IMR-90 (cell line): ENCODE measurements at regions of chr3 and their contacts with region 1.

Region 1: GRCh38 chr3:29280404-29281093 is at the start of gene RBMS3:
- DNase-seq: peak; percentile 97
- ATAC-seq: peak; percentile 82
- H3K4me3 ChIP-seq: peak within 1 kb of the TSS; percentile 91
- H3K27ac ChIP-seq: peak within 1 kb of the TSS; percentile 95
- H3K4me1 ChIP-seq: peaks cover 7% of the 10 kb centered on the region
- H3K27me3 ChIP-seq: no peaks in the 10 kb centered on the region
- CTCF ChIP-seq: peak; percentile 65
- POLR2A ChIP-seq: peak; percentile 79; the same call in 1 of the 2 replicates
- RAD21 ChIP-seq: peak; percentile 73
- total RNA-seq, gene RBMS3: 110 and 127 TPM in 2 replicates

Region 2: DNA sequence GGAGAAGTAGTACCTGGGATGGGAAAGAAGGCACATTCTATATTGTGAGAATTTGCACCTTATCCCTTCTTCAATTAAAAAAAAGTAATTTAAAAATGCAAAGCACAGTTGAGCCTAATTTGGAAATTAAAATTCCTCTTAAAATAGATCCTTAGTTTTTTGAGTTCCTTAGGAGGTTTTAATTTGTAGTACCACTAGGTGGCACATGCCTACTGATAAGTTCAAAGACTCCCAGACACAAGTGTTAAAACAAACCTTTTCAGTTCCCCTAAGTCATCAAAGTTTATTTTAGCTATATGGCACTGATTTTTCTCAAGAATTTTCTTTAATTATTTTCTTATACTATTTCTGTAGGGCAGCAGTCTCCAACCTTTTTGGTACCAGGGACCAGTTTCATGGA is 804.4 kb before region 1 on chr3:
- CTCF ChIA-PET with region 1: no interaction called
- POLR2A ChIA-PET with region 1: no interaction called
- dilution Hi-C with region 1: no loop called
- in situ Hi-C with region 1: no loop called
- intact Hi-C with region 1: loop called (anchors 5 kb)
- DNase-seq: peak; percentile 57
- ATAC-seq: peak; percentile 56; the same call in 1 of the 2 replicates
- H3K4me3 ChIP-seq: no peak overlapping the region
- H3K27ac ChIP-seq: no peak overlapping the region
- H3K4me1 ChIP-seq: no peaks in the 10 kb centered on the region
- H3K27me3 ChIP-seq: no peaks in the 10 kb centered on the region
- CTCF ChIP-seq: peak; percentile 59
- POLR2A ChIP-seq: no peak
- RAD21 ChIP-seq: peak; percentile 45

Region 3: DNA sequence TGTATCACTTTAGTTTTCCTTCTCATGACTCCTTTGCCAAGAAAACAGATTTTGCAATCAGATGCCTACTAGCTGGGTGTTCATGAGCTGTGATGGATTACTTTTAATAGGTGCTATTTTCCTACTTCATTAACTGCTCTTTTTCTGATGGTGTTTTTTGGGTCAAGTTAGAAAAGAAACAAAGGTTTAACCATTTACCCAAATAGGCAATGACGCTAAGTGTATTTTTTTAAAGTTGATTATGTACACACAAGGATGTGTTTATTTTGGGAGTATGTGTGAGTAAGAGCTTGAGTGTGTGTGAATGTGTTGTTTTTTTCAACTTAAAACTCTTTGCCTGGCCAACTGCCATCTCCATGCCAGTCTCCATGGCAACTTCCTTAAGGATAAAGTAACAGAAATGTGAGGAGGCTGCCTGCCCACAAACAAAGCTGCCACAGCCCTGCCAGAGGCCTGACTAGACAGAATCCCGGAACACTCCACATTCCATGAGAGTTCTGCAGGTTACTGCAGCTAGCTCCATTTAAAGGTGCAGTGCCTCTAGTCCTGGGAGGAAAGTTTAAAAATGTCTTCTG is 215.3 kb before region 1 on chr3:
- CTCF ChIA-PET with region 1: no interaction called
- POLR2A ChIA-PET with region 1: no interaction called
- dilution Hi-C with region 1: no loop called
- in situ Hi-C with region 1: no loop called
- intact Hi-C with region 1: loop called (anchors 1 kb)
- DNase-seq: peak; percentile 99
- ATAC-seq: peak; percentile 98
- H3K4me3 ChIP-seq: no peak overlapping the region
- H3K27ac ChIP-seq: no peak overlapping the region
- H3K4me1 ChIP-seq: 0 out of 2 replicates have a peak, but pooled peaks cover 4% of the 10 kb centered on the region
- H3K27me3 ChIP-seq: no peaks in the 10 kb centered on the region
- CTCF ChIP-seq: no peak
- POLR2A ChIP-seq: no peak
- RAD21 ChIP-seq: peak; percentile 27

Region 4: DNA sequence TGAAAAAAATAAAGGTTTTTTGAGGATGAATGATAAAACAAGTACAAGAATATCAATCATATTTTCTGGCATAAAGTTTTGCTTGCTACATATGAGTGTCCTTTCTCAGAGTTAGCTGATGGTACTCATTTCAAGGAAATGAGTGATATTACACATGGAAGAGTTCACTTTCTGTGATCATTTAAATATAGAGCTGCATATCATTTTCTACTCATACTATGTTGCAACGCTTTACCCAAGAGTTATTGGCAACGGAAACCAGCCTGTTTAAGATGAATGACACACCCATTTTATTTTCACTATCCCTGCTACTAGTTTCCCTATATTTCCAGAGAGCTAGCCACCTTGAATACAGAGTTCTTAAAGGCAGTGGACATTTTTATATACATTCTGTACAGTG is 35.1 kb before region 1 on chr3:
- CTCF ChIA-PET with region 1: no interaction called
- POLR2A ChIA-PET with region 1: no interaction called
- dilution Hi-C with region 1: no loop called
- in situ Hi-C with region 1: no loop called
- intact Hi-C with region 1: no loop called
- DNase-seq: no peak
- ATAC-seq: no peak
- H3K4me3 ChIP-seq: no peak overlapping the region
- H3K27ac ChIP-seq: no peak overlapping the region
- H3K4me1 ChIP-seq: no peaks in the 10 kb centered on the region
- H3K27me3 ChIP-seq: no peaks in the 10 kb centered on the region
- CTCF ChIP-seq: no peak
- POLR2A ChIP-seq: no peak
- RAD21 ChIP-seq: no peak

Region 5: GRCh38 chr3:29430558-29430971 is 150.0 kb after region 1 on chr3:
- CTCF ChIA-PET with region 1: no interaction called
- POLR2A ChIA-PET with region 1: no interaction called
- dilution Hi-C with region 1: no loop called
- in situ Hi-C with region 1: no loop called
- intact Hi-C with region 1: loop called (anchors 5 kb)
- DNase-seq: peak; percentile 75
- ATAC-seq: peak; percentile 77
- H3K4me3 ChIP-seq: no peak overlapping the region; the same call in 1 of the 2 replicates
- H3K27ac ChIP-seq: peak overlapping the region; percentile 87
- H3K4me1 ChIP-seq: peaks cover 9% of the 10 kb centered on the region
- H3K27me3 ChIP-seq: no peaks in the 10 kb centered on the region
- CTCF ChIP-seq: no peak
- POLR2A ChIP-seq: no peak
- RAD21 ChIP-seq: no peak

Region 6: DNA sequence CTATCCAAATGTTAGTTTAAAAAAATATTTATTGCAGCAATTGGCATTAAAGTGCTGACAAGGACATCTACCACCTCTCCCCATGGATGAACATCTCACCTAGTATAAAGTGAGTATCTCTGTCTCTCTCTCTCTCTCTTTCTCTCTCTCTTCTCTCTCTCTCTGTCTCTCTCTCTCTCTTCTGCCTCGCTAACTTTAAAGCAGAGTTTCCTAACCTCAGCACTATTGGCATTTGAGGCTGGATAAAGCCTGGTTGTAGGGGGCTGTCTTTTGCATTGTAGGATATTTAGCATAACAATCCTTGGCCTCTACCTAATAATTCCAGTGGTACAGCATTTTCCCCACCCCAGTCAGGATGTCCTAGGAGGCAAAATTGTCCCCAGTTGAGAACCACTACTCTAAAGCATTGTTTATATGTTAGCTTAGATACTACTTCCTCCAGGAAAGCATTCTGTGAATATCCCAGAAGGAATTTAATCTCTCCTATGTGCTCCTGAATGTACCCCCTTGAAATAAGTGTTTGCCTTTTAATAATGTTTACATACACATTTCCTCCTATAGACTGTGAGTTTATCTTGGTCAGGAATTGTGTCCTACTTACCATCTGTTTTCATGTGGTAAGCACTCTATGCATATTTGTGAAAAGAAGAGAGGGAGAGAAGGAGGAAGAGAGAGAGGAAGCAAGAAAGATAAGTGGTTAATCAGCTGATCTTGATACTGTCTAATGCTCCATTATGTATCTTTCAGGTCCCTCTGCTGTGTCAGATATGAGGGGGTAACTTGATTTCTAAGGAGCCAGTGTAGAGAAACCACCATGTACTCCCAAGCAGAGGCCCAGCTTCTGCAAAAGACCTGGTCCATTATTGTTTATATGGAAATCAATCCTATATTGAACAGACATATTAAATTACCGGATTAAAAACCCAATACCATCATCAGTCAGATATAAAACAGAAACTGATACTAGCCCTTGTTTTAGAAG is 346.9 kb after region 1 on chr3:
- CTCF ChIA-PET with region 1: no interaction called
- POLR2A ChIA-PET with region 1: no interaction called
- dilution Hi-C with region 1: no loop called
- in situ Hi-C with region 1: no loop called
- intact Hi-C with region 1: no loop called
- DNase-seq: peak; percentile 23
- ATAC-seq: peak; percentile 67
- H3K4me3 ChIP-seq: no peak overlapping the region
- H3K27ac ChIP-seq: no peak overlapping the region
- H3K4me1 ChIP-seq: peaks cover 3% of the 10 kb centered on the region
- H3K27me3 ChIP-seq: no peaks in the 10 kb centered on the region
- CTCF ChIP-seq: no peak
- POLR2A ChIP-seq: no peak
- RAD21 ChIP-seq: no peak

Region 7: DNA sequence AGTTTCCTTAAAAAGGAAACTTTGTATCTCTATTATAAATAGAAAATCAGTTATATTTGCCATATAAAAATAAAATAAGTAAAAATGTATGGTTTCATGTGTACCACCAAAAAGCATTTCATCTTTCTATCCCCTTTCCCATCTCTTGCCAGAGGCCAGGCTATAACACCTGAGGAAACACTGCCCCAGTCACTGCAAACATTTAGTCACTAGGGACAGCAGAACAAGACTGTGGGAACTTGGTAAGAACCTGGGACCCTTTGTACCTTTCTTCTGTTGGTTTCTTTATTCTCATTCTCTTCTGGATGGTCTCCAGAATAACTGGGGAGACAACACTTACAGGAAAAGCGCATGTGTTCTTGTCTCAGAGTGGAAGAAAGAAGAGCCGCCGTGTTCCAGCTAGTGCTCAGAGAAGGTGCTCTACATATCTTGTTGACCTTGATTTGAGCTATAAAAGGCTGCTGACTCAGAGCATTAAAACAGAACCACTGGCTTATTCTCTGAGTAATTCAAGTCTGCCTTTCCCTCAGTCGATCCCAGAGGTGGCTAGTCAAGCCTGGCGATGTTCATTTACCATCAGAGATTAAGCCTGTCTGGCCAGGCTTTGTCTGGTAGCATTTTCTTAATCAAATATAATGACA is 362.0 kb after region 1 on chr3:
- CTCF ChIA-PET with region 1: no interaction called
- POLR2A ChIA-PET with region 1: no interaction called
- dilution Hi-C with region 1: no loop called
- in situ Hi-C with region 1: no loop called
- intact Hi-C with region 1: loop called (anchors 5 kb)
- DNase-seq: peak; percentile 70
- ATAC-seq: peak; percentile 57; the same call in 1 of the 2 replicates
- H3K4me3 ChIP-seq: no peak overlapping the region
- H3K27ac ChIP-seq: no peak overlapping the region
- H3K4me1 ChIP-seq: peaks cover 4% of the 10 kb centered on the region; the same call in 1 of the 2 replicates
- H3K27me3 ChIP-seq: no peaks in the 10 kb centered on the region
- CTCF ChIP-seq: no peak
- POLR2A ChIP-seq: no peak
- RAD21 ChIP-seq: no peak

Region 8: DNA sequence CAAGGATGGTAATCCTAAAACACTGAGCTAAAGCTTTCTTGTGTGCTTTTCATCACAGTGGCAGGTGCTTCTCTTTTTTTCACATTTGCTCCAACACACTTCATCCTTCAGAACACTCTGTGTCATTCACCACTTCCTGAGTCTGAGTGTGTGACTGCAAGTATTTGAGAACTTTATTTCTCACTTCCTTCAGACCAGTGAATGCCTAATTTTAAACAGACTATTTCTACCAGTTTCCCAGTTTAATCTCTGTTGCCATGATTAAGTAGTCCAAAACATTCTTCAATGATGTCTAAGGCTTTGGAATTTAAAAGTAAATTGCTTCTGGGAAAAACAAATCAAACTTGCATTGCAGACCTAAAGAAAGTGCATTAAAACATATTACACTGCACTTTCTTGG is 541.5 kb after region 1 on chr3:
- CTCF ChIA-PET with region 1: no interaction called
- POLR2A ChIA-PET with region 1: no interaction called
- dilution Hi-C with region 1: no loop called
- in situ Hi-C with region 1: no loop called
- intact Hi-C with region 1: loop called (anchors 10 kb)
- DNase-seq: peak; percentile 86
- ATAC-seq: peak; percentile 91
- H3K4me3 ChIP-seq: no peak overlapping the region
- H3K27ac ChIP-seq: no peak overlapping the region
- H3K4me1 ChIP-seq: no peaks in the 10 kb centered on the region
- H3K27me3 ChIP-seq: no peaks in the 10 kb centered on the region
- CTCF ChIP-seq: no peak
- POLR2A ChIP-seq: no peak
- RAD21 ChIP-seq: no peak